ENCODE measurements at regions of chr10 and their contacts with region 1.

Region 1: DNA sequence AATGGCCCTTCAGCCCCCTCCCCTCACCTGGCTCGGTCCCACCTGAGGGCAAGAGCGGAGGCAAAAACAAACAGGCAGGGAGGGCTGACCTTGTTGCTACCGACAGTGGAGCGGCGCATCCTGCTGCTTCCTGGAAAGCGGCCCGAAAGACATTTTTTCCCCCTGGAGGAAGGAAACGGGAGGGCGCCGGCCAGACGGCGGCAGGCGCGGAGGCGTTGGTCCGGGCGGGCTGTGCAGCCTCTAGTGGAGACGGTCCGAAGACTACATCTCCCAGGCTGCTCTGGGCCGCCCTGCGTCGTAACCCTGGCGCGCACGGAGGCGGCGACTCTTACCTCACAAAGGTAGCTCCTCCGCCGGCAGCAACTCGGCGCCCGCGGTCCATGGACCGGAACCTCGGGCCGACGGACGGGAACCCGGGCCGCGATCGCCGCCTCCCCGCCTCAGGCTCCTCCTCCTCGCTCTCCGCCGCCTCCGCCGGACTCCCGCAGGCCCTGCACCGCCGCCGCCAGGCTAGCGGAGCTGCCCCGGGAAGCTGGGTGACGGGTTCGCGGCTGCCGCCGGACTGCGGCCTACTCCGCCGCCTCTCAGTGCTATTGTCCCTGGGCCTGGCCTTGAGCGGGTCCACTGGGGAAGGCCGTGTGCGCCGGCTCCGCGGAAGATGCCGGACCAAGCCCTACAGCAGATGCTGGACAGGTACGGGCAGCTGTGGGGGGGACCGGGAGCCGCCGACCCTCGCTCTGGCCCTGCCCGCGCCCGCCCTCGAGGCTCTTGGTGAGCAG is at the starts of genes CPEB3 and MARCHF5:
- DNase-seq: peak; percentile 96
- ATAC-seq: peak; percentile 97
- H3K4me3 Mint-ChIP-seq: peak within 1 kb of the TSS; percentile 93
- H3K27ac Mint-ChIP-seq: peak within 1 kb of the TSS; percentile 88
- H3K4me1 Mint-ChIP-seq: peaks cover 20% of the 10 kb centered on the region
- H3K27me3 Mint-ChIP-seq: no peaks in the 10 kb centered on the region
- CTCF ChIP-seq: peak; percentile 80
- total RNA-seq, gene CPEB3: 1.8 to 2.2 TPM
- total RNA-seq, gene MARCHF5: 25.4 to 29.3 TPM

Region 2: GRCh38 chr10:92087750-92088395 is 203.2 kb before region 1 on chr10:
- CTCF ChIA-PET with region 1: interaction called, 6 read pairs
- POLR2A ChIA-PET with region 1: no interaction called
- intact Hi-C with region 1: loop called (anchors 5 kb)
- DNase-seq: peak; percentile 78
- ATAC-seq: peak; percentile 99
- H3K4me3 Mint-ChIP-seq: no peak overlapping the region
- H3K27ac Mint-ChIP-seq: no peak overlapping the region
- H3K4me1 Mint-ChIP-seq: peaks cover 4% of the 10 kb centered on the region
- H3K27me3 Mint-ChIP-seq: no peaks in the 10 kb centered on the region
- CTCF ChIP-seq: peak; percentile 74

Region 3: DNA sequence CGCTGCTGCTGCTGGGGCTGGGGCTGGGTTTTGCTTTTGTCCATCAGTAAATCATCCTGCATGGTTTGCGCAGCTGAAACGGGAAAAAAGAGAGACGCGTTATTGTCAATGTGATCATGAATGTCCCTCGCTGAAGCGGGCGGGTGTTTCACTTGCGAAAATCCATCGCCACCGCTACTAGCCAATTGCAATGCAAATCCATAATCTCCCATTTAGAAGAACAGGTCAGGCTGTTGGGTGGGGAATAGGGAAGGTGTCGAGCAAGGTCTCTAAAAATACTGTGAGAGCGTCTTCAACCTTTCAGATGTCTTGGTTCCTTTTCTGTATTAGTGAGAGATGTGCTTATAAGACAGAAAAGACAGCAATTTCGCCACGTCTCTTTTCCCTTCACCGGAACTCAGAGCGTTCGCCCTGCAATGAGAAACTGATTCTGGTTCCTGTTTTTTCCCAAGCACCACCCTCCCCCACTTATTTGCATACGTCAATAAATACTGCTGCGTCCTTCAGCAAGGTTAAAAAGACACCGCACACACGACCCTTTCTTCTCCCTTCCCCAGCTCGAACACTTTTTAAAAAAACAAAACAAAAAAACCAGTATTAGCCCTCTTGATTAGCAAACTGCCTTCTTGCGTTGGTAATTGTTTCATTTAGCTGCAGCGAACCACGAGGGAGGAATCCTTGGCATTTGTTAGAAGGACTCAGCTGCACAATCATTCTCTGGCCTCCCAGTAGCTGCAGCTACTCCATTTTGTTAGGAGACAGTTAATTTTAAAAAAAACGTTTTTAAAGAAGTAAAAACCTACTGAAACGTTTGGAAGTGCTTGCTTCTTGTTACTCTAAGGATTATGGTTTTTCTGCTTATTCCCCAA is 50.5 kb before region 1 on chr10:
- CTCF ChIA-PET with region 1: interaction called, 6 read pairs
- POLR2A ChIA-PET with region 1: no interaction called
- intact Hi-C with region 1: loop called (anchors 5 kb)
- DNase-seq: peak; percentile 29
- ATAC-seq: peak; percentile 17
- H3K4me3 Mint-ChIP-seq: peak overlapping the region; percentile 80
- H3K27ac Mint-ChIP-seq: no peak overlapping the region
- H3K4me1 Mint-ChIP-seq: peaks cover 32% of the 10 kb centered on the region
- H3K27me3 Mint-ChIP-seq: peaks cover 3% of the 10 kb centered on the region
- CTCF ChIP-seq: no peak

Region 4: GRCh38 chr10:92305133-92306072 is 14.4 kb after region 1 on chr10:
- CTCF ChIA-PET with region 1: interaction called, 11 read pairs
- POLR2A ChIA-PET with region 1: interaction called, 4 read pairs
- intact Hi-C with region 1: no loop called
- DNase-seq: no peak
- ATAC-seq: no peak
- H3K4me3 Mint-ChIP-seq: no peak overlapping the region
- H3K27ac Mint-ChIP-seq: no peak overlapping the region
- H3K4me1 Mint-ChIP-seq: peaks cover 41% of the 10 kb centered on the region
- H3K27me3 Mint-ChIP-seq: no peaks in the 10 kb centered on the region
- CTCF ChIP-seq: no peak